Caco-2 (cell line): ENCODE measurements at regions of chr10 and their contacts with region 1.

Region 1: GRCh38 chr10:69392481-69393000 is 24.2 kb downstream of the TACR2 start:
- DNase-seq: peak; percentile 91 to 94
- H3K4me3 ChIP-seq: no peak overlapping the region
- H3K4me3 Mint-ChIP-seq: no peak overlapping the region
- H3K27ac Mint-ChIP-seq: no peak overlapping the region
- H3K4me1 ChIP-seq: peaks cover 4% of the 10 kb centered on the region
- H3K4me1 Mint-ChIP-seq: no peaks in the 10 kb centered on the region
- H3K27me3 ChIP-seq: no peaks in the 10 kb centered on the region
- H3K27me3 Mint-ChIP-seq: no peaks in the 10 kb centered on the region
- CTCF ChIP-seq: peak; percentile 99 to 100

Region 2: GRCh38 chr10:69004821-69005220 is 387.7 kb before region 1 on chr10:
- CTCF ChIA-PET with region 1: interaction called, 4 read pairs
- POLR2A ChIA-PET with region 1: no interaction called
- intact Hi-C with region 1: loop called (anchors 1 kb)
- DNase-seq: no peak
- H3K4me3 ChIP-seq: no peak overlapping the region
- H3K4me3 Mint-ChIP-seq: no peak overlapping the region
- H3K27ac Mint-ChIP-seq: no peak overlapping the region
- H3K4me1 ChIP-seq: no peaks in the 10 kb centered on the region
- H3K4me1 Mint-ChIP-seq: no peaks in the 10 kb centered on the region
- H3K27me3 ChIP-seq: no peaks in the 10 kb centered on the region
- H3K27me3 Mint-ChIP-seq: no peaks in the 10 kb centered on the region
- CTCF ChIP-seq: peak; percentile 64 to 75

Region 3: DNA sequence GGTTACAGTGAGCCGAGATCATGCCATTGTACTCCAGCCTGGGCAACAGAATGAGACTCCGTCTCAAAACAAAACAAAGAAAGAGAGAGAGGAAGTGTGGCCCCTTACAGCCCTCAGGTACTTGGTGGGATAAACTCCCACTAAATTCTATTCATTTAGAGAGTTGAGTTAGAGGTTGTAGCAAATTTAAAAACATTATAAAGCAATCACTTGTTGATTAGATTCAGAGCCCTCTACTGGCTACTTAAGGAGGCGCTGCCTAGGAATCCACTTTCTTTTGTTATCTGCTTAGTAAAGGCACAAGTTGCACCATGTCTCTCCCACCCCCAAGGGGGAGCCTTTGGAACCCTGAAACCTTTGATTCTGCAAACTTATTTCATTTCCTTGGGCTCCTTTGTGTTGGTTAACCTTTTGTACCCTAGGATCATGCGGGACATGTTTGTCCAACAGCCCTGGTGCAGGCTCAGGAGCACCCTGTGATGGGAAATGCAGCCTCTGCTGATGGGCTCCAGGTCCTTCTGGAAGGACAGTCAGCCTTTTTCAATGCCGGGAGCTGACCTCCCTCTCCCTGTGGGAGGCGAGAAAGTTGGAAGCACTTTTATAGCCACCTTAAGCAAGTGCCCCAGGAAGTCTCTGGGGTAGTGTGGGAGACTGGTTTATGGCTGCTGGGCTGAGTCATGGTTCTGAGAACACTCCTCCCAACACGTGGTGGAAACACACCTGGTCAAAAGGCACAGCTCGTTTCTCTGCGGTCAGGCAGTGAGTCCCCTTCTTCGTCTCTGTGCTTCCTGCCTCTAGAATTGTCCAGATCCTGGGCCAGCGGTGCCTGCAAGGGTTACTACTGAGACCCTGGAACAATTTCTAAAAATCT is 170.1 kb before region 1 on chr10:
- CTCF ChIA-PET with region 1: interaction called, 10 read pairs
- POLR2A ChIA-PET with region 1: interaction called, 3 read pairs
- intact Hi-C with region 1: no loop called
- DNase-seq: peak; percentile 89 to 96
- H3K4me3 ChIP-seq: no peak overlapping the region
- H3K4me3 Mint-ChIP-seq: peak overlapping the region; percentile 68
- H3K27ac Mint-ChIP-seq: peak overlapping the region; percentile 86
- H3K4me1 ChIP-seq: peaks cover 60% of the 10 kb centered on the region
- H3K4me1 Mint-ChIP-seq: peaks cover 24% of the 10 kb centered on the region
- H3K27me3 ChIP-seq: no peaks in the 10 kb centered on the region
- H3K27me3 Mint-ChIP-seq: no peaks in the 10 kb centered on the region
- CTCF ChIP-seq: peak; percentile 84 to 89

Region 4: DNA sequence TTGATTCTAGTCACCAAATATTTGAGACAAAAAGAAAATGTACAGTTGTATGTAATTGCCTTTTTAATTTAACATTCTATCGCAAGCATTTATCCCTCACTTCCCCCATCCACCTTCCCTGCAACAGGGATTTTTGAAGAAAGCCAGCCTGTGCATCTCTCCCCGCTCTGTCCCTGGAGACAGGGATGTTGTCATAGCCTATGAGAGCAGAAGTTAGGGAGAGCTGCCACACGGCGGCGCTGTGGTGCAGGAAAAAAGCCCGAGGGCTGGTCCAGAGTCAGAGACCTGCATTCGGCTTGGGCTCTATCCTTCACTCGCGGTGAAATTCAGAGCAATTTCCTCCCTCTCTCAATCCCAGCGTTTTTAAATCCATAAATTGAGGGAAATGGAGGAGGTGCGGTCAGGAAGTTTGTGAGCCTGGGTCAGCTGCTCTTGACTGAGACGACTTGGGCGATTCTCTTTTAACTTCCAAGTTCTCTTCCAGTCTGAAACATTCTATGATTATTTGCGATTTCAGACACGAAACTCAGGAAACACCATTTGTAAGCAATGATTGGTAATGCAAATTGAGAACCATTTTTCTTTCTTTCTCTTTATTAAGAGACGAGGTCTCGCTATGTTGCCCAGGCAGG is 154.9 kb before region 1 on chr10:
- CTCF ChIA-PET with region 1: interaction called, 39 read pairs
- POLR2A ChIA-PET with region 1: no interaction called
- intact Hi-C with region 1: loop called (anchors 1 kb)
- DNase-seq: peak; percentile 86 to 95
- H3K4me3 ChIP-seq: no peak overlapping the region
- H3K4me3 Mint-ChIP-seq: no peak overlapping the region
- H3K27ac Mint-ChIP-seq: no peak overlapping the region
- H3K4me1 ChIP-seq: peaks cover 5% of the 10 kb centered on the region
- H3K4me1 Mint-ChIP-seq: peaks cover under 1% of the 10 kb centered on the region
- H3K27me3 ChIP-seq: no peaks in the 10 kb centered on the region
- H3K27me3 Mint-ChIP-seq: no peaks in the 10 kb centered on the region
- CTCF ChIP-seq: peak; percentile 99 to 100

Region 5: GRCh38 chr10:69333205-69333604 is 59.3 kb before region 1 on chr10:
- CTCF ChIA-PET with region 1: interaction called, 14 read pairs
- POLR2A ChIA-PET with region 1: no interaction called
- intact Hi-C with region 1: loop called (anchors 1 kb)
- DNase-seq: peak; percentile 93 to 95
- H3K4me3 ChIP-seq: no peak overlapping the region
- H3K4me3 Mint-ChIP-seq: peak overlapping the region; percentile 52
- H3K27ac Mint-ChIP-seq: peak overlapping the region; percentile 86
- H3K4me1 ChIP-seq: peaks cover 70% of the 10 kb centered on the region
- H3K4me1 Mint-ChIP-seq: peaks cover 55% of the 10 kb centered on the region
- H3K27me3 ChIP-seq: no peaks in the 10 kb centered on the region
- H3K27me3 Mint-ChIP-seq: no peaks in the 10 kb centered on the region
- CTCF ChIP-seq: peak; percentile 69 to 85